AG04449 (cell line): ENCODE measurements at regions of chr9 and their contacts with region 1.

Region 1: DNA sequence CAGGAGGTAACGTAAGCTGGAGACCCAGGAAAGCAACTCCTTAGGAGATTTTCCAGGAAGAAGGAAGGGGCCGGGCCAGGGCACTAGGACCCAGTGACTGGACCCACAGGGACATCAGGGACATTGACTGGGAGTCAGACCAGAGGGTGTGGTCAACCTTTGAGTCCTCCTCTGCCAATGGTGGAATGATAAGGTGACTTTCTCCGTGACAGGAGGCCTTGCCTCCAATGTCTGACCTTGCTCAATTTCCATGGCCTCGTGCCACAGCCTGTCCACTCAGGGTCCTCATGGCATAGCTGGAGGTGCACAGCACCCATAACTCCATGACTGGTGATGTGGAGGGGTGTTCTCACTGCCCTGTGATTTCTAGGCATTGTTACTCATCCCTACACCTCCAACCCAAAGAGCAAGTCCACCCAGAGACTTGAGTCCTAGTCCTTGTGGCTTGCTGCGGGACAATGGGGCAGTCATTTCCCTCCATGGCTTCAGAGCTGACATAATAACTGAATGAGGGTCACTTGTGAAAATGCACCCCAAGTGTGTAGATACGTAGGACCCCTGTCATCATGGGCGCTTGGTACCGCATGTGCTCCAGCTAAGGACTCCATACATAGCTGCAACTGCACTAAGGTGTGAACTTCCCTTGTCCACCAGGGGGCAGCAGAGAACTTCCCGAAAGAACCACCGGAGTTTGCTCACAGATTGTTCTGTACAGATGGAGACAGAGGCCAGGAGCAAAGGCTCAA is 4.1 kb upstream of the AMBP start:
- DNase-seq: peak; percentile 41
- H3K4me3 ChIP-seq: no peak overlapping the region
- CTCF ChIP-seq: peak; percentile 85

Region 2: DNA sequence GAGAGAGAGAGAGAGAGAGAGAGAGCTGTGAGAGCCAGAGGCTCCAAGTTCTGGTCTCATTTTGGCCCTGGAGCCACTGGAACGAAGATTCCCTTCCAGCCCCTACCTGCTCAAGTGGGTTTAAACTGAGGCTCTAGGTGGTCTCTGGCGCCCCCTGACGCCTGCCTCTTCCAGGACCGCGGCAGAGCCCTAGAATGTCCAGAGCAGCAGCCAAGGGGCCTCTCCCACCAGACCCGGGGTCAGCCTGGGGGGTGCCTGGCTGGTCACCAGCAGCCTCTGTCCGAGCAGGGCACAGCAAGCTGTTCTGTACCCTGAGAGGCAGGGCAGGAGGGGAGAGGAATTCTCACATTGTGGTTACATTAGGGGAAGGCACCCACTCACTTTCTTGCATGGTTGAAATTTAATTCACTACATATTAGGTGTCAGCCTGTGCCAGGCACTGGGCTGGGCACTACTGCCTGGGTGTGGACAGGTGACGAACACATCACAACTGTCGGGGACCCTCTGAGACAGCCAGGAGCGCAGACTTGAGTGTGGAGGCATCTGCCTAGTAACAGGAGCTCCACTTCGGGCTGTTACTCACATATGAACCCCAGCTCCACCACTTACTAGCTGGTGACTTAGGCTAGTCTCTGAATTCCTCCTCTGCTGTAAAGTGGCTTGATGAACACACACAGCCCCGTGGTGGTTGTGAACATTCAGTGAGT is 48.6 kb before region 1 on chr9:
- CTCF ChIA-PET with region 1: interaction called, 11 read pairs
- POLR2A ChIA-PET with region 1: no interaction called
- DNase-seq: no peak
- H3K4me3 ChIP-seq: no peak overlapping the region
- CTCF ChIP-seq: peak; percentile 62

Region 3: DNA sequence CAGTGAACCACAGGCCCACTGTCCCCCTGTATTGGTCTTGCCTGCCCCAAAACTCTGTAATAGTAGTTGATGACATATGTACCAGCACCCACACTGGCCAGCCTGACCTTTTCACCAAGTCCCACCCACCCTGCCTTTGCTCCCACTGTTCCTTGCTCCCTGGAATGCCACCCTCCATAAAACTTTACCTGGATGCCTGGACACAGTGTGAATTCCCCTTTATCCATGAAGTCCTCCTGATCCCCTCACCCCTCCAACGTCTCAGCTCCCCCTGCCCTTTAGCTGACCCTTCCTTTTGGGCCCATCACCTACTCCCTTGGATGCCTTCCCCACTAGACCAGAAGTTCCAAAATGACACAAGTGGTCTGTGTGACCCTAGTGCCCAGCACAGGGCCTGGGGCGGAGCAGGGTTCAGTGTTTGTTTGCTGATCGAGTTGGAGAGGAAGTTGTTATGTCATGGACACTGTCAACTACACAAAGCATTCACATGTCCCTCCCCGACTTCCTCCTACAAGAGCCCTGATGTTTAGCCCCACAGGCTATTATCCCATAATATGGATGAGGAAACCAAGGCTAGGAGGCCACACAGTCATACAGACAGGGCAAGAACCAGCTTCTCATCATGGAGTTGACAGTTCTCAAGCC is 20.2 kb before region 1 on chr9:
- CTCF ChIA-PET with region 1: interaction called, 80 read pairs
- POLR2A ChIA-PET with region 1: no interaction called
- DNase-seq: no peak
- H3K4me3 ChIP-seq: no peak overlapping the region
- CTCF ChIP-seq: no peak

Region 4: GRCh38 chr9:114141553-114142402 is 59.6 kb after region 1 on chr9:
- CTCF ChIA-PET with region 1: interaction called, 10 read pairs
- POLR2A ChIA-PET with region 1: no interaction called
- DNase-seq: no peak
- H3K4me3 ChIP-seq: no peak overlapping the region
- CTCF ChIP-seq: no peak

Region 5: DNA sequence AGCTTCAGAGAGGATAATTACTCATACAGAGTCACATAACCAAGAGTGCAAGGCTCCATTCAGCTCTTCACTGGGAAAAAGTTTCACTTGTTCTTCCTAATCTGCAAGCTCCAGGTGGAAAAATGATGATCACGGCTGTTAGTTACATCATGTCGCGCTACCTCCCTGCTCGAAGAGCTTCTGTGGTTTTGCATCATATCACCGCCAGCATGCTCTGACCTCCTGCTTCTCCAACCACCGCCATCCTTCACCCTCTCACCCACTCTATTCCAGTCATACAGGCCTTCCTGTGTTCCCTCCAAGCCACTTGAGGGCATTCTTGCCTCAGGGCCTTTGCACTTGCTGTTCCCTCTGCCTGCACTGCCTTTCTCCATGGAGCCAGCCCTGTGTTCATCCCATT is 120.2 kb after region 1 on chr9:
- CTCF ChIA-PET with region 1: no interaction called
- POLR2A ChIA-PET with region 1: no interaction called
- DNase-seq: no peak
- H3K4me3 ChIP-seq: no peak overlapping the region
- CTCF ChIP-seq: no peak

Region 6: GRCh38 chr9:114250235-114250568 is 168.0 kb after region 1 on chr9:
- CTCF ChIA-PET with region 1: interaction called, 10 read pairs
- POLR2A ChIA-PET with region 1: no interaction called
- DNase-seq: peak; percentile 73
- H3K4me3 ChIP-seq: no peak overlapping the region
- CTCF ChIP-seq: no peak